Activated naive CD4-positive, alpha-beta T cell treated with anti-CD3 and anti-CD28 coated beads for 36 hours (primary cell): ENCODE measurements at regions of chr1 and their contacts with region 1.

Region 1: DNA sequence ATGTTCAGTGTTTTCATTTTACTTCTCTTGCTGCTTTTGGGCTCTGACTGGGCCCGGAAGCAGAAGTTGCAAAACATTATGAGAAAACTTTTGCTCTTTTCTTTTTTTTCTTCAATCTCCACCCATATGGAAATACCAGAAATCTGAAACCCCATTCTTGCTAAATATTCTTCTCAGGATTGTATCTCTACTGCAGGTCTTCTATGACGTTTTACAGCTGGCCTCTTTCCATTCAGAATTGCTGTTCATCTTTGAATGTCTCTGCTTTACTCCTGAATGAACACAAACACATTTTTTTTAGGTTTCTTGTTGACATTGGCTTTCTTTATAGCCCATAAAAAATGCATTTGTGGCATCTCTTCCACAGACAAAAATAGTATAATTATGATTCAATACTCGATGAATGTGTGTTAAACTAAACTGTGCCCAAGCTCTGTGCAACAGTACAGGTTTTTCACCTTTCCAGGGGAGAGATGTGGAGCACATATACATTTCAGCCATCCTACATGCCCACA is 18.8 kb downstream of the PTPRC start:
- DNase-seq: peak; percentile 38
- H3K4me3 Mint-ChIP-seq: peak overlapping the region; percentile 61
- H3K27ac Mint-ChIP-seq: peak overlapping the region; percentile 100
- H3K4me1 Mint-ChIP-seq: peaks cover 60% of the 10 kb centered on the region
- H3K27me3 Mint-ChIP-seq: no peaks in the 10 kb centered on the region

Region 2: GRCh38 chr1:198167436-198167934 is 490.1 kb before region 1 on chr1:
- CTCF ChIA-PET with region 1: no interaction called
- intact Hi-C with region 1: loop called (anchors 2 kb)
- DNase-seq: peak; percentile 44
- H3K4me3 Mint-ChIP-seq: peak overlapping the region; percentile 55
- H3K27ac Mint-ChIP-seq: peak overlapping the region; percentile 93
- H3K4me1 Mint-ChIP-seq: peaks cover 90% of the 10 kb centered on the region
- H3K27me3 Mint-ChIP-seq: no peaks in the 10 kb centered on the region

Region 3: GRCh38 chr1:198612471-198613260 is 44.9 kb before region 1 on chr1:
- CTCF ChIA-PET with region 1: no interaction called
- intact Hi-C with region 1: loop called (anchors 2 kb)
- DNase-seq: no peak
- H3K4me3 Mint-ChIP-seq: peak overlapping the region; percentile 82
- H3K27ac Mint-ChIP-seq: peak overlapping the region; percentile 98
- H3K4me1 Mint-ChIP-seq: peaks cover 80% of the 10 kb centered on the region
- H3K27me3 Mint-ChIP-seq: no peaks in the 10 kb centered on the region

Region 4: DNA sequence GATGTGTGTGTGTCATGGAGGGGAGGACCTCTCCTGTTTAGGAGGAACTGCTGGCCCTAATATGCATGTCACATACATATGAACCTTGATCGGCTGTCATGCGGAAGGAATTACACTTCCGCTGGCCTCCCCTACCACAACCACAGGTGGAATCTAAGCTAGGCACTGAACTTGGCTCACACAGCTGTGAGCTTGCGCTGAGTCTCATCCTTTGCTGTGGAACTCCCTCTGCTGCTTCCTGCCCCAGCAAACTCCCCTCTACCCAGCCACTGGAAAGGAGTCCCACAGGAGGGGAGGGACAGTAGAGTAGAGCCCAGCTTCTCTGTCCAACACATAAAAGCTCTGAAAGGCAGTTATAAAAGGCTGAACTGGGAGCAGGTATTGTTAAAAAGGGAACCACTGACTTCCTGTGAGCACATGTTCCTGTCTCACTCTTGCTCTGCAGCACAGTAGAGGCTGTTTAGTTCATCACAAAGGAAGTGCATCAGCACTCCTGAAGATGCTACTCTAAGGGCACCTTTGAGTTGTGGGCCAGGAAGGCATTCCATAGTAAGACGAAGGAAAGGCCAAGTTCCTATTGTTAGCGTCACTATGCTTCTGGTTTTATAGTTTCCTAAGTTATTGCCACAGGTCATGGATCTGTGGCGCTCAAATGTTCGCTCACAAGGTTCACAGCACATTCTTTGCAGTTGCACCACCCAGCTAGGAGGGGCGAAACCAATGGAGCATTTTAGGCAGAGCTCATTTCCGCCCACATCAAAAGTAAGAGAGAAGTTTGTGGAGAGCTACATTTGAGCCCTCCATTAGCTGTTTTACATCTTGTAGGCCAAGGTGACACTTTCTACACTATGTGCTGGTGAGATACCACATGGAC is 36.4 kb before region 1 on chr1:
- CTCF ChIA-PET with region 1: no interaction called
- intact Hi-C with region 1: loop called (anchors 2 kb)
- DNase-seq: peak; percentile 77
- H3K4me3 Mint-ChIP-seq: peak overlapping the region; percentile 82
- H3K27ac Mint-ChIP-seq: peak overlapping the region; percentile 100
- H3K4me1 Mint-ChIP-seq: peaks cover 86% of the 10 kb centered on the region
- H3K27me3 Mint-ChIP-seq: no peaks in the 10 kb centered on the region

Region 5: DNA sequence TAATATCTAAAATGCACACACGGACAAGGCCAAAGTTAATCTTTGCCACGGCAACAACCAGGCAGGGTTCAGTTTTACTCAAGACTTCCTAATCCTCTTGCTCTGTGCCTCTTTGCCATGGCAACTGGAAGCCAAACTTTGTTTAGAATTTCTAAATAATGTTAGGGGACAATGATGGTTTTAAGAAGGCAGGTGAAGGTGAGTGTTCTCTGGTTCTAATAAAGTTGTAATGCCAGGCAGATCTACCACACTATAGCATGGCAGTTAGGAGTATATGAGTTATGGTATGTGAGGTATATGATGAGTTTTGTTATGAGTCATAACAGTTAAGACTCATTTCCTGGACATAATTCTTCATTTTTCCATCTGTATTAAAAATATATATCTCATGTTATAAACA is 16.1 kb before region 1 on chr1:
- CTCF ChIA-PET with region 1: interaction called, 5 read pairs
- intact Hi-C with region 1: loop called (anchors 1 kb)
- DNase-seq: peak; percentile 49
- H3K4me3 Mint-ChIP-seq: peak overlapping the region; percentile 92
- H3K27ac Mint-ChIP-seq: peak overlapping the region; percentile 100
- H3K4me1 Mint-ChIP-seq: peaks cover 41% of the 10 kb centered on the region
- H3K27me3 Mint-ChIP-seq: no peaks in the 10 kb centered on the region

Region 6: DNA sequence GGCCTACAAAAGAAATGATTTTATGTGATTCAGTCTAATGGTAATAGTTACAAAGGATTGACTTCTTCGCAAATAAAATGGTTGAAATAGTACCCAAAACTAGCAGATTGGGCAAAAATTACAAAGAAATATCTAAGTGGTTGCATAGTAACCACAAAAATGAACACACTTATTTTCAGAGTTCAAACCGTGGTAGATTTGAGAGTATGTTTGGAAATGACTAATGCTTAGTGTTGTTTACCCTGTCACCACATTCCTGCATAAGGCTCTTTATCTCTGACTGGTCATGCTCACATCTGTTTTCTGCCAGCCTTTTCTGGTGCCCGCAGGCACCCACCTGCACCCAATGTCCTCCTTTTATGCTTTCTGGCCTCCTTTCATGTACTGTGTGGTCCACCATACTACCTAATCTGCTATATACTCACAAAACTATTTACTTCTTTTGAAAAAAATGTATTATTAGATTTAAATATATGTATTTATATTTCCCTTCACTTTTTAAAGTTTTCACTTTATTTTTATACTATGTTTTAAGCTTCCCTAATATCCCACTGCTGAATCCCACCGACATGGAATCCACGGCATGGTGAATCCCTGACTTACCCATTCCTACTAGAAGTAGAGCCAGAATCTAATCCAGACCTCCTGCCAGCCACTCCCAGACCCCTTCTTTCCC is 11.6 kb after region 1 on chr1:
- CTCF ChIA-PET with region 1: interaction called, 3 read pairs
- intact Hi-C with region 1: loop called (anchors 1 kb)
- DNase-seq: peak; percentile 46
- H3K4me3 Mint-ChIP-seq: peak overlapping the region; percentile 57
- H3K27ac Mint-ChIP-seq: peak overlapping the region; percentile 84
- H3K4me1 Mint-ChIP-seq: peaks cover 87% of the 10 kb centered on the region
- H3K27me3 Mint-ChIP-seq: no peaks in the 10 kb centered on the region

Region 7: DNA sequence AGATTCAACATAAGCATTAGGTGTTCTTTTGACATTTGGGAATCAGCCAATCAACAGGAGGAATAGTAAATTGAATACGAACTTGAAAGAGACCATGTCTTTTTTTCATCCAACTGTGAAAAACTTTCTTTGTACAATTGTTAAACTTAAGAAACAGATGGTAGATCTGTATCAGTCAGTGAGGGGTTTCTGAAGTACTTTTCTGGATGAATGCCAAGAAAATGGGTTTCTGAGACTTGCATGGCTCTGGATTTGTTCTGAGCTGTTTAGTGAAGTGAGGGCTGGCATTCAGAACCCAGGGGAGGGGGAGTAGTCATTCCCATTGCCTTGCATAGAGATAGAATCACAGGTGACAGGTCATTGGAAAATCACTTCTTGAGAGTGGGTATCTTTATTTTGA is 18.6 kb after region 1 on chr1:
- CTCF ChIA-PET with region 1: interaction called, 3 read pairs
- intact Hi-C with region 1: loop called (anchors 1 kb)
- DNase-seq: no peak
- H3K4me3 Mint-ChIP-seq: peak overlapping the region; percentile 52
- H3K27ac Mint-ChIP-seq: peak overlapping the region; percentile 92
- H3K4me1 Mint-ChIP-seq: peaks cover 89% of the 10 kb centered on the region
- H3K27me3 Mint-ChIP-seq: no peaks in the 10 kb centered on the region

Region 8: GRCh38 chr1:198823626-198824025 is 166.0 kb after region 1 on chr1:
- CTCF ChIA-PET with region 1: no interaction called
- intact Hi-C with region 1: no loop called
- DNase-seq: no peak
- H3K4me3 Mint-ChIP-seq: no peak overlapping the region
- H3K27ac Mint-ChIP-seq: no peak overlapping the region
- H3K4me1 Mint-ChIP-seq: no peaks in the 10 kb centered on the region
- H3K27me3 Mint-ChIP-seq: no peaks in the 10 kb centered on the region

Region 9: DNA sequence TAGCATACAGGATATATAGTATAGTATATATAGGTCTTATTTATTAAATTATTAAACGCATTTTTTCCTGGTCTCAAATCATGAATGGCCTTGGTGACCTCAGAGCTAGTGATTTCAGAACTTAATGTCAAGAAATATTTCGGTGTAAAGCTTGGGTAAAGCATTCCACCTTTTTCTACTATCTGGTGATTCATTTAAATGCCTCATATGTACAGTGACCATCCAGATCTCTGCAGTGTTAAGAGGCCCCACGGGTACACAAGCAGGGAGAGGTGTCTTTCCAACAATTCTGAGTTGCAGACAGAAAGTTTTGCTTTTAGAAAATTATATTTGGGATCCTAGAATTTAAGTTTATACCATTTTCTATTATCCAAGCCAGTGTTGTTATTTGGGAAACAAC is 607.7 kb after region 1 on chr1:
- CTCF ChIA-PET with region 1: no interaction called
- intact Hi-C with region 1: no loop called
- DNase-seq: no peak
- H3K4me3 Mint-ChIP-seq: no peak overlapping the region
- H3K27ac Mint-ChIP-seq: no peak overlapping the region
- H3K4me1 Mint-ChIP-seq: peaks cover 4% of the 10 kb centered on the region
- H3K27me3 Mint-ChIP-seq: peaks cover 5% of the 10 kb centered on the region